Endothelial cell of umbilical vein (primary cell): ENCODE measurements at regions of chr6 and their contacts with region 1.

Region 1: DNA sequence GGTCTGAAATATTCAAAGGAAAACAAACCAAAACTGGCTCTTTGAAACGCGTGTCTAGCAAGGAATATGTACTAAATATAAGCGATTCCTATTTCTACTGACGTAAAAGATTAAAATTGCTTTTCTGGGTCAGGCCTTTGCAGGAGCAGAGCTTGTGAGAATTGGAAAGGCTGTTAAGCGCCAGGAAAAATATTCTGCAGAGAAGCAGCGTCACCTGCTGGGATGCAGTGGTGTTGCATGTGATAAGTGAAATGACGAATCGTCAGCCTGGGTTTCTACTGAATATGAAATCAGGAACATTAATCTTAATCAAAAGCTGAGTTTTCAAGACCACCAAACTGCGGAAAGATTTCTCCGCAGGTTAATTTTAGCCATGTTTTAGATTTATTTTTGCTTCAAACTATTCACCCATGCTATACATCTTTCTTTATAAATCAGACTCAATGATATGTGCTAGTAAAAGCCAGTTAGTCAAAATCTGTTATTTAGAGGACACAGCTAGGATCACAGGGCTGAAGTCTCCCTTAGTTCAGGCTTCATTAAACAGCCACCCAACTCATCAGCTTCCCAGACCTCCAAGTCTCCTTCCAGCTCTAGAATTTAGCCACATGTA is 67.4 kb downstream of the ALDH8A1 start:
- DNase-seq: peak; percentile 79
- H3K4me3 ChIP-seq: no peak overlapping the region
- H3K27ac ChIP-seq: peak overlapping the region; percentile 3
- H3K4me1 ChIP-seq: peaks cover 13% of the 10 kb centered on the region
- H3K27me3 ChIP-seq: no peaks in the 10 kb centered on the region
- CTCF ChIP-seq: peak; percentile 82
- POLR2A ChIP-seq: no peak

Region 2: GRCh38 chr6:134152767-134153485 is 729.6 kb before region 1 on chr6:
- CTCF ChIA-PET with region 1: interaction called, 30 read pairs
- POLR2A ChIA-PET with region 1: no interaction called
- dilution Hi-C with region 1: no loop called
- intact Hi-C with region 1: loop called (anchors 1 kb)
- DNase-seq: no peak
- H3K4me3 ChIP-seq: no peak overlapping the region
- H3K27ac ChIP-seq: no peak overlapping the region
- H3K4me1 ChIP-seq: no peaks in the 10 kb centered on the region
- H3K27me3 ChIP-seq: no peaks in the 10 kb centered on the region
- CTCF ChIP-seq: no peak
- POLR2A ChIP-seq: no peak

Region 3: GRCh38 chr6:134422426-134423231 is 459.9 kb before region 1 on chr6:
- CTCF ChIA-PET with region 1: no interaction called
- POLR2A ChIA-PET with region 1: no interaction called
- dilution Hi-C with region 1: no loop called
- intact Hi-C with region 1: loop called (anchors 5 kb)
- DNase-seq: peak; percentile 81
- H3K4me3 ChIP-seq: no peak overlapping the region
- H3K27ac ChIP-seq: peak overlapping the region; percentile 90
- H3K4me1 ChIP-seq: peaks cover 68% of the 10 kb centered on the region
- H3K27me3 ChIP-seq: no peaks in the 10 kb centered on the region
- CTCF ChIP-seq: no peak
- POLR2A ChIP-seq: peak; percentile 61

Region 4: DNA sequence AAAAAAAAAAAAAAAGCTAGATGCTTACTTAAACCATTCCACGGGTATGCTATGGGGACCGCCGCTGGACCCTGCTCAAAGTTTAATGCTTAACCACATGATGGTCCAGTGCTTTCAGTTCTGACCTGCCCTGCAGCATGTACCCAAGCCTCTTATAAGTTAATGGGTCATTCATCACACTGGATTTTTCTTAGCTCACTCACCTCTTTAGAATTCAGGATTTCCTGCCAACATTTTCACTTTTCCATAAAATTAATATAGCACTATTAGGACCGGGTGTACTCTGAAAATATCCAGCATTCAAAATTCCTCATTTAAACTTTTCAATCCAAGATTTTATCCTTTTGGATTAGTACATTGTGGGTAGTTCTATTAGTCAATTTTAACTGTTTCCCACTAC is 73.4 kb before region 1 on chr6:
- CTCF ChIA-PET with region 1: no interaction called
- POLR2A ChIA-PET with region 1: no interaction called
- dilution Hi-C with region 1: no loop called
- intact Hi-C with region 1: no loop called
- DNase-seq: peak; percentile 16
- H3K4me3 ChIP-seq: no peak overlapping the region
- H3K27ac ChIP-seq: no peak overlapping the region
- H3K4me1 ChIP-seq: no peaks in the 10 kb centered on the region
- H3K27me3 ChIP-seq: no peaks in the 10 kb centered on the region
- CTCF ChIP-seq: no peak
- POLR2A ChIP-seq: no peak

Region 5: DNA sequence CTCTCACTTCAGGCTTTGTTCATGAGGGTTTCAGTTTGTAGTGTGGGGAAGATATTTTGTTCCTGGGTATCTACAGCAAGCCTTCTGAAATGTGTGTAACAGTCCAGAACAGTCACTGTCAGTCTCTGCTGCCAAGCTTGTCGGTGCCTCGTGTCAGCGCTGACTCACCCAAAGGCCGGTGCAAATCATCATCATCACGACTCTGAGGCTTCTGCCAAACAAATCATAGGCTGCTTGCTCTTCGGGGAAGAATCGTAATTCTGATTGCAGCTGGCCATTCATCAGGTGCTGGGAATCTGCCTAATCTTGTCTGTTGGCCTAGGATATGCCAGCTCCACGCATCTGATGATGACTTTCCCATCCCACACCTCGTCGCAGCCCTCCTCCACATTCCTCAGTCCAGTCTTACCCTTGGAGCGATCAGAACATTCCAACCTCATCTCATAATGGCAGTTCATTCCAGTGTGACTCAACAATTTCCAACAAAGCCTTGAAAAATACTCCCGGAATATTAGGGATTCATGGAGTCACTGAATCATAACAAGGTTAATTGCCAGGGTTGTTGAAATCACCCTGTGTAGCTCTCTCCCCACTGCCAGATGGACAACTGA is 26.5 kb after region 1 on chr6:
- CTCF ChIA-PET with region 1: interaction called, 13 read pairs
- POLR2A ChIA-PET with region 1: no interaction called
- dilution Hi-C with region 1: no loop called
- intact Hi-C with region 1: no loop called
- DNase-seq: peak; percentile 68
- H3K4me3 ChIP-seq: no peak overlapping the region
- H3K27ac ChIP-seq: peak overlapping the region; percentile 34
- H3K4me1 ChIP-seq: no peaks in the 10 kb centered on the region
- H3K27me3 ChIP-seq: no peaks in the 10 kb centered on the region
- CTCF ChIP-seq: no peak
- POLR2A ChIP-seq: peak; percentile 28

Region 6: GRCh38 chr6:135094403-135094848 is 211.9 kb after region 1 on chr6:
- CTCF ChIA-PET with region 1: no interaction called
- POLR2A ChIA-PET with region 1: no interaction called
- dilution Hi-C with region 1: no loop called
- intact Hi-C with region 1: no loop called
- DNase-seq: no peak
- H3K4me3 ChIP-seq: no peak overlapping the region
- H3K27ac ChIP-seq: no peak overlapping the region
- H3K4me1 ChIP-seq: no peaks in the 10 kb centered on the region
- H3K27me3 ChIP-seq: peaks cover 14 to 36% of the 10 kb centered on the region in 2 experiments
- CTCF ChIP-seq: no peak
- POLR2A ChIP-seq: no peak